ENCODE measurements at regions of chr22 and their contacts with region 1.

Region 1: GRCh38 chr22:21982338-21982965 is at the start of gene TOP3B:
- DNase-seq: peak; percentile 43
- ATAC-seq: peak; percentile 89
- H3K4me3 ChIP-seq: peak within 1 kb of the TSS; percentile 93 to 99
- H3K27ac ChIP-seq: peak within 1 kb of the TSS; percentile 70
- H3K4me1 ChIP-seq: peaks cover 6 to 10% of the 10 kb centered on the region in 2 experiments; a peak in 3 of 4 replicates
- H3K27me3 ChIP-seq: no peaks in the 10 kb centered on the region
- CTCF ChIP-seq: no peak
- POLR2A ChIP-seq: peak; percentile 75
- RAD21 ChIP-seq: no peak
- total RNA-seq, gene TOP3B: 50.1 TPM

Region 2: DNA sequence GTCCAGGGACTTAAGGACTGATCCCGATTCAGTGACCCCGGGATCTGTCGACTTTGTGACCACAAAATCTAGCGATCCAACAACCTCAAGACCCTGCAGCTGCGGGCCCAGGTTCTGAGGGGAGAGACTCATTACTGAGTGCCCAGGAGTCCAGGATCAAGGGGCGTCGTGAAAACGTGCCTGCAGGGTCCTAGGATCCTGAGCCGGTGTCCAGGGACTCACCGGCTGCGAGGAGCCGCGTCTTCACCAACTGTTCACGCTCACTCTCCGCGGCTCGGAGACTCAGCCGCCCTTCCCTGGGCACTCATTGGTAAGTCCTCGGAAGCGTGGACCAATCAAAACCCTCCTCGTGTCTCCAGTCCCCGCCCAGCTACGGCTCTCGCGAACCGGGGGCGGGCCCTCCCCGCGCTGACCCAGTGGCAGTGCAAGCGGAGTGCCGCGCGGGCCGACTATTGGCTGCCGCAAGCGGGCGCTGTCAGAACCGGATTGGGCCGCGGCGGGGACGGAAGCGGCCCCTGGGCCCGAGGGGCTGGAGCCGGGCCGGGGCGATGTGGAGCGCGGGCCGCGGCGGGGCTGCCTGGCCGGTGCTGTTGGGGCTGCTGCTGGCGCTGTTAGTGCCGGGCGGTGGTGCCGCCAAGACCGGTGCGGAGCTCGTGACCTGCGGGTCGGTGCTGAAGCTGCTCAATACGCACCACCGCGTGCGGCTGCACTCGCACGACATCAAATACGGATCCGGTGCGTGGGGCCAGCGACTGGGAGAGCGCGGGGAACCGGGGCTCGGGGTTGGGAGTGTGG is 340.5 kb before region 1 on chr22 and contains the start of gene SDF2L1:
- CTCF ChIA-PET with region 1: no interaction called
- POLR2A ChIA-PET with region 1: no interaction called
- RAD21 ChIA-PET with region 1: no interaction called
- intact Hi-C with region 1: no loop called
- DNase-seq: peak; percentile 96
- ATAC-seq: peak; percentile 92
- H3K4me3 ChIP-seq: peak within 1 kb of the TSS; percentile 88 to 93
- H3K27ac ChIP-seq: peak within 1 kb of the TSS; percentile 81
- H3K4me1 ChIP-seq: peaks cover 12 to 35% of the 10 kb centered on the region in 2 experiments
- H3K27me3 ChIP-seq: no peaks in the 10 kb centered on the region
- CTCF ChIP-seq: no peak
- POLR2A ChIP-seq: peak; percentile 46
- RAD21 ChIP-seq: no peak
- total RNA-seq, gene SDF2L1: 86.2 TPM

Region 3: GRCh38 chr22:21972293-21972779 is 10.1 kb before region 1 on chr22:
- CTCF ChIA-PET with region 1: interaction called, 17 read pairs
- POLR2A ChIA-PET with region 1: no interaction called
- RAD21 ChIA-PET with region 1: no interaction called
- intact Hi-C with region 1: no loop called
- DNase-seq: no peak
- ATAC-seq: peak; percentile 85
- H3K4me3 ChIP-seq: no peak overlapping the region
- H3K27ac ChIP-seq: no peak overlapping the region
- H3K4me1 ChIP-seq: no peaks in the 10 kb centered on the region
- H3K27me3 ChIP-seq: no peaks in the 10 kb centered on the region
- CTCF ChIP-seq: peak in 2 of 3 experiments; percentile 92 to 98; a peak in 4 of 6 replicates
- POLR2A ChIP-seq: no peak
- RAD21 ChIP-seq: no peak